CD4-positive, alpha-beta memory T cell (primary cell): ENCODE measurements at regions of chr2 and their contacts with region 1.

Region 1: DNA sequence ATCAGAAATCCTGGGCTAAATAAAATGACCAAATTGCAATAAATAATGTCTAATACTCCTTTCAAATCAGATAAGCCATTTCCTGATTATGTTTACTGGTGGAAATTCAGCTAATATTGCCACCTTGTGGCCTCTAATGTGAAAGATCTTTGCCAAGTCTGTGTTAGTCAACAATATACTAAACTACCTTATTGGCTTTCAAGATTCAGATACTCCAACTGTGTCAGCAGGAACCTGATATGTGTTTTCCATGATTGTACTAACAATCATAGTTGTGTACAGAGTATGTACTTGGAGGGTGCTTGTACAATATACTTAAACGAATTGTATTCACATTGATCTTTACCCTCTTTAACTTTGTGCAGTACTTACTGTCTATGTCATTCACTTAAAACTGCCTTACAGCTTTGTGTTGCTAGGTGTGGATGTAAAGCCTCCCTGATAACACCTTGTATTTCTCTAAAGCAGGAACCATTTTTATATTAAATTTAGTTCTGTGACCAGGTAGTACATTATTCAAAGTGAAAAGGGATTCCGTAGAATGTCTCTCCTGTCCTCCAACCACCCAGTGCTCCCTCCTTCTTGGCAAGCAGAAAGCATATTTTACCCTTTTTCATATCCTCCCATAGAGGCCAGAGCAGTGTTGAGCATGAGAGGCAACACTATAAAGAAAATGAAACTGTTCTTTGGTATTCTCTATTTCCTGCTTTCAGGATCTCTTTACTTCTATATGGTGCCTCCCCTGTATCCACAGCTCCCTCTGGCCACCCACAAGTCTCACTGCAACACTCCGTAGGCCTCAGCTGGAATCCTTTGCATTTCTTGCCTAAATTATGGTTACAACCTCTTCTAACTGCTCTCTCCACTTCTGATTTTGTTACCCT is 75.2 kb upstream of the C2orf15 start:
- DNase-seq: peak; percentile 26 to 49 (median 42)
- H3K4me3 ChIP-seq: peak overlapping the region in 1 of 2 donors; percentile 15
- H3K4me3 Mint-ChIP-seq: no peak overlapping the region
- H3K27ac ChIP-seq: peak overlapping the region; percentile 7
- H3K27ac Mint-ChIP-seq: no peak overlapping the region
- H3K4me1 ChIP-seq: peaks cover 18% of the 10 kb centered on the region
- H3K4me1 Mint-ChIP-seq: peaks cover 0 to 7% (median 1%) of the 10 kb centered on the region in 4 donors
- H3K27me3 ChIP-seq: no peaks in the 10 kb centered on the region
- H3K27me3 Mint-ChIP-seq: no peaks in the 10 kb centered on the region

Region 2: DNA sequence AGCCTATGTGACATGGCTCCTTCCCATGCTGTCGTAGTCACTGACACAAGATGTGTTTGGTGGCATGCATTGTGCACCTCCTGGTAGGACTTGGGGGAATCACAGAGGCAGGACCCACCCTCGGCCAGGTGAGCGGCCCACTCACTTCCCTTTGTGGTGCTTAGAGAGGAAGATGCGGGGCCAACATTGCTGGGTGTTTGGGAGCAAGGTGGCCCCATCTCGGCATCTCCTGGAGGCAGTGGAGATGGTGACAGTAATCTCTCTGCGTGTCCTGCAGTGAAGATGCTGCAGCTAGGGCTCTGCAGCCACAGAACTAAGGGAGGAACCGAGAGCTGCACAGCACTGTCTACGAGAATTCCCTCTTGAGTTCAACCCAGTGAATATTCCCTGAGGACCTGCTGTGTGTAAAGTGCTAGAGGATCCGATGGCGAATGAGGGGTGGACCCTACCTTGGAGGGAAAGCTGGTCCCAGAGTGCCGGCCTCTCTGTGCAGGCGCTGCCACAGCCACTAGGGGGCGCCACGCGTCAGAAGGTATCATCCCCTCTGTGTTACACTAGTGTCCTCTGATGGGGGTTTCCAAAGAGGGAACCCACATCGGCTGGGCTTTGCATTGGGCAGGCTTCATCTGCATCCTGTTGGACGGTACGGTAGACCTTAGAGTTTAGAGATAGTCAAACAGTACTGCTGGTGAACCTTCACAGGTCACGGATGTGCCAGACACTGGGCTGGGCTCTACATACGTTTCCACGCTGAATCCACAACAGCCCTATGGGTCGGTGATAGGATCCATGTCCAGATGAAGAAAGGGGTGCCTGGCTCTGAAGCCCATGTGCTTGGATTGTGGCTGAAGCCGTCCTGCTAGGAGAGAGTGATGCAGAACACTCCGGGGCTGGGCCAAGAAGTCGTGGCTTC is 497.2 kb before region 1 on chr2:
- CTCF ChIA-PET with region 1: interaction called, 4 read pairs
- POLR2A ChIA-PET with region 1: no interaction called
- intact Hi-C with region 1: loop called (anchors 1 kb)
- DNase-seq: peak; percentile 47 to 60 (median 53)
- H3K4me3 ChIP-seq: no peak overlapping the region
- H3K4me3 Mint-ChIP-seq: peak overlapping the region in 1 of 8 donors; percentile 18
- H3K27ac ChIP-seq: peak overlapping the region; percentile 7
- H3K27ac Mint-ChIP-seq: peak overlapping the region; percentile 3 to 75 (median 37)
- H3K4me1 ChIP-seq: no peaks in the 10 kb centered on the region
- H3K4me1 Mint-ChIP-seq: peaks cover 0 to 9% (median 4%) of the 10 kb centered on the region in 4 donors
- H3K27me3 ChIP-seq: no peaks in the 10 kb centered on the region
- H3K27me3 Mint-ChIP-seq: no peaks in the 10 kb centered on the region

Region 3: DNA sequence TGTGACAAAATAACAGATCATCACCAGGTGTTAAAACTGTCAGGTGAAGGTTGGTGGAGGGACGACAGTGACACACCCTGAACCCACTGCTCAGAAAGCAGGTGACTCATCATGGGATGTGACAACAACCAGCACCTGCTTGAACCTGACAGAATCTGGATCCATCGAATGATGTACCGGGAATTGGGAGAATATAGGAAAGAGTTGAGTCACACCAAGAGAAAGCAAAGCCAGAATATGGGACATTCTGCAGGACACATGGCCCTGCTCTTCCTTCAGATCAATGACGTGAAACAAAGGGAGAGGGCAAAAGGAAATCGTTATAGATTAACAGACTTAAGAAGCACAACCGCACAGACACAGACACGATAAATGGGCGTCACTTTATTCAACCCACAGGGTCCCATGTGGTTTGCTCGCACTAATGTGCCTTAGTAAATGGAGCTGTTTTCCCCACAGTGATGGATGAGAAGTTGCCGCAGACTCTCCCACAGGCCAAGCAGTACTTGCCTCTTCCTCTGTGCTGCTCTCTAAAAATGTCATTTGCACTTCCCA is 230.4 kb before region 1 on chr2:
- CTCF ChIA-PET with region 1: no interaction called
- POLR2A ChIA-PET with region 1: no interaction called
- intact Hi-C with region 1: loop called (anchors 5 kb)
- DNase-seq: peak; percentile 66 to 88 (median 79)
- H3K4me3 ChIP-seq: peak overlapping the region in 1 of 2 donors; percentile 22
- H3K4me3 Mint-ChIP-seq: peak overlapping the region; percentile 43 to 77 (median 64)
- H3K27ac ChIP-seq: peak overlapping the region; percentile 54
- H3K27ac Mint-ChIP-seq: peak overlapping the region; percentile 88 to 99 (median 97)
- H3K4me1 ChIP-seq: peaks cover 40% of the 10 kb centered on the region
- H3K4me1 Mint-ChIP-seq: peaks cover 36 to 53% (median 44%) of the 10 kb centered on the region in 4 donors
- H3K27me3 ChIP-seq: no peaks in the 10 kb centered on the region
- H3K27me3 Mint-ChIP-seq: no peaks in the 10 kb centered on the region

Region 4: GRCh38 chr2:99180755-99181623 is 114.7 kb after region 1 on chr2 and contains the starts of genes MITD1 and MRPL30:
- CTCF ChIA-PET with region 1: no interaction called
- POLR2A ChIA-PET with region 1: no interaction called
- intact Hi-C with region 1: loop called (anchors 1 kb)
- DNase-seq: peak; percentile 91 to 93 (median 92)
- H3K4me3 ChIP-seq: peak within 1 kb of the TSS; percentile 70 to 71
- H3K4me3 Mint-ChIP-seq: peak within 1 kb of the TSS; percentile 98 to 100 (median 99)
- H3K27ac ChIP-seq: peak within 1 kb of the TSS; percentile 91
- H3K27ac Mint-ChIP-seq: peak within 1 kb of the TSS; percentile 93 to 100 (median 99)
- H3K4me1 ChIP-seq: peaks cover 57% of the 10 kb centered on the region
- H3K4me1 Mint-ChIP-seq: peaks cover 41 to 79% (median 60%) of the 10 kb centered on the region in 4 donors
- H3K27me3 ChIP-seq: no peaks in the 10 kb centered on the region
- H3K27me3 Mint-ChIP-seq: no peaks in the 10 kb centered on the region
- total RNA-seq, gene MITD1: 79.1 to 84.3 TPM
- total RNA-seq, gene MRPL30: 20.2 to 22.7 TPM